ENCODE measurements at regions of chr10 and their contacts with region 1.

Region 1: DNA sequence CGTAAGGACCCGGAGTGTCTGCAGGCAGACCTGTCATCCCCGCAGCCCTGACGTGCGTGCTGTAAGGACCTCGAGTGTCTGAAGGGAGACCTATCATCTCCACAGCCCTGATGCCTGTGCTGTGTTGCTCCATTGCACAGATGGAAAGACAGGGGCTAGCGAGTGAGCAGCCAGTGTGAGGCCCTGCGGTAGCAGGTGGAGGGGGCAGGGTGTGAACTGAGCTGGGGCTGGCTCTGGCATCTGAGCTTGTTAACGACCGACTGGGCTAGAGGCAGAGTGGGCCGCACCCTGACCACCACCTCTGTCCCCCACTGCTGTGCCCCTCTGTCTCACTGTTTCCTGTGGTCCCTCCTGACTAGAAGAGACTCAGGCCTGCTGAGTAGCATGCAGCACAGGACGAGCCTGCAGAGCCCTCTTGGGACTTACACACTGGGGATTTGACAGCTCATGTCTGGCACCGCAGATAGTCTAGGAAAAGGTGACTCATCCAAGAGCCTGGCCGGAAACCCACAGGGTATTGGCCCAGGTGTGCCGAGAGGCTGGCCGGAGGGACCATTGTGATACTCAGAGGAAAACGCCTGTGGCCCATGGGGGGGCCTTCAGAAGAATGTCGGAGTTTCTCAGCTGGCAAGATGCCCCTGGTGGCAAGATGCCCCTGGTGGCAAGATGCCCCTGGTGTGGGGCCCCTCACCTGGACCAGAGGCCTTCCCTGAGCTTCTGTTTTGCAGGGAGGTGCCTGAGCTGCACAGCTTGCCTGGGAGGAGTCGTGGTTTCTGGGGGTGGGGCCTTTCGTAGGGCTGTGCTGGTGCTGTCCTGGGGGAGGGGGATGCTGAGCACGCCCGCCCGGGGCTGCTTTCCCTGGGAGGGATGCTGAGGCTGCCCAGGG is 34.3 kb downstream of the INPP5A start:
- DNase-seq: peak in 1 of 2 donors; percentile 84
- H3K4me3 ChIP-seq: peak overlapping the region in 1 of 2 donors; percentile 2
- H3K27ac ChIP-seq: peak overlapping the region; percentile 67 to 68
- H3K4me1 ChIP-seq: peaks cover 15 to 60% (median 46%) of the 10 kb centered on the region in 4 donors
- H3K27me3 ChIP-seq: no peaks in the 10 kb centered on the region
- CTCF ChIP-seq: no peak

Region 2: DNA sequence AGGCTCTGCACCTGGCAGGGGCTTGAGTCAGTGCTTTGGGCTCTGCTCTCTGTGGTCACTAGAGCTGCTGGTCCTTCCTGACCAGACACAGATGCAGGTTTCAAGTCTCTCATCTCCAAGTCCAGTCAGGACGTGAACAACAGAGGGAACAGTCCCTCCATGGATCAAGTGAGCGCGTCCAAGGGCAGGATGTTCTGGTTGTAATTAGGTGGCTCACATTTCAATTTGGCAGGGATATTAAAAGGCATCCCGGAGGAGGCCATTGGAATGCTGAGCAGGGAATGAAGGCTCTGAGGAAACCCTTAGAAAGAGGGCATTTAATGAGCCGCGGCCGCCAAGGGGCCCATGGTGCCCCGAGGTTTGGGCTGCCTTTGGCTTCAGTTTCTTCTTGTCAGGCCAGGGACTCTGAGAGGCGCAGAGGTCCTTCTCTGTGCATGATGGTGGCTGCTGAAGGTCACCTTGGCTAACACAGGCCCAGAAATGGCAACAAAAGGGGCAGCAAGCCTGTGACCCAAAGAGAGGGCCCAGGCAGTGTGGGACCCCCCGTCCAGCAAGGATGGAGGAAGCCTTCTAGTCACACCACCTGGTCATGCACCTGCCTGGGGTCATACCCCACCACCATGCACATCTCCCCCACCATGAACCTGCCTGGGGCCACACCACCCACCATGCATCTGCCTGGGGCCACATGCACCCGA is 65.0 kb before region 1 on chr10:
- intact Hi-C with region 1: loop called (anchors 2 kb)
- DNase-seq: peak; percentile 63 to 71
- H3K4me3 ChIP-seq: no peak overlapping the region
- H3K27ac ChIP-seq: no peak overlapping the region
- H3K4me1 ChIP-seq: peaks cover 0 to 13% (median 6%) of the 10 kb centered on the region in 4 donors
- H3K27me3 ChIP-seq: no peaks in the 10 kb centered on the region
- CTCF ChIP-seq: no peak

Region 3: GRCh38 chr10:132637477-132638129 is 65.7 kb after region 1 on chr10:
- intact Hi-C with region 1: loop called (anchors 10 kb)
- DNase-seq: no peak
- H3K4me3 ChIP-seq: peak overlapping the region; percentile 0 to 1
- H3K27ac ChIP-seq: peak overlapping the region in 1 of 2 donors; percentile 41
- H3K4me1 ChIP-seq: peaks cover 0 to 69% (median 34%) of the 10 kb centered on the region in 4 donors
- H3K27me3 ChIP-seq: no peaks in the 10 kb centered on the region
- CTCF ChIP-seq: peak; percentile 72 to 76

Measured in tibial artery (tissue), 4 donors.